Activated CD8-positive, alpha-beta T cell treated with anti-CD3 and anti-CD28 coated beads, Interleukin-2, amount 10 ng/mL, durations not matched to agents 7 days and 5 days (primary cell): ENCODE measurements at regions of chr15 and their contacts with region 1.

Region 1: GRCh38 chr15:42704492-42704926 is 32.4 kb downstream of the CDAN1 start:
- DNase-seq: peak; percentile 76
- ATAC-seq: peak; percentile 95
- H3K4me3 Mint-ChIP-seq: no peak overlapping the region
- H3K27ac Mint-ChIP-seq: no peak overlapping the region
- H3K4me1 Mint-ChIP-seq: peaks cover 5% of the 10 kb centered on the region
- H3K27me3 Mint-ChIP-seq: no peaks in the 10 kb centered on the region

Region 2: DNA sequence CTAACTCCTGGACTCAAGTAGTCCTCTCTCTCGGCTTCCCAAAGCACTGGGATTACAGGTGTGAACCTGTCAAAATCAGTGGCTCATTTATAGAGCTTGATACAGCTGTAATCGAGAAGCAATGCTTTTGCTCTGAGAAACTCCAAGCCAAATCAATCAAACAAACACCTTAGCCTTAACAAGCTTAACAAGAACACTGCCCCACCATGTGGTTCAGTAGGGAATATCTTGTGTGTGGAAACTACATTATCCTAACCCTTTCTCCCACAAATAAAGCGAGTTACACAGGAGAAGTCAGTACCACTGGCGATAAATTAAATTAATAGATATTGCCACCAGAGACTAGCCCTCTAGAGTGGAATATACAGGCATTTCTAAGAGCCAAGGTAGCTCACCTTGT is 18.5 kb after region 1 on chr15:
- CTCF ChIA-PET with region 1: no interaction called
- POLR2A ChIA-PET with region 1: no interaction called
- DNase-seq: no peak
- ATAC-seq: no peak
- H3K4me3 Mint-ChIP-seq: no peak overlapping the region
- H3K27ac Mint-ChIP-seq: no peak overlapping the region
- H3K4me1 Mint-ChIP-seq: no peaks in the 10 kb centered on the region
- H3K27me3 Mint-ChIP-seq: no peaks in the 10 kb centered on the region

Region 3: GRCh38 chr15:42920519-42921227 is 216.2 kb after region 1 on chr15 and contains the start of gene TTBK2:
- CTCF ChIA-PET with region 1: interaction called, 15 read pairs
- POLR2A ChIA-PET with region 1: no interaction called
- DNase-seq: peak; percentile 98
- ATAC-seq: peak; percentile 97
- H3K4me3 Mint-ChIP-seq: peak within 1 kb of the TSS; percentile 92
- H3K27ac Mint-ChIP-seq: peak within 1 kb of the TSS; percentile 89
- H3K4me1 Mint-ChIP-seq: peaks cover 36% of the 10 kb centered on the region
- H3K27me3 Mint-ChIP-seq: peaks cover 2% of the 10 kb centered on the region
- total RNA-seq, gene TTBK2: 10.1 to 13.9 TPM